CD4-positive, alpha-beta memory T cell (primary cell): ENCODE measurements at regions of chr16 and their contacts with region 1.

Region 1: DNA sequence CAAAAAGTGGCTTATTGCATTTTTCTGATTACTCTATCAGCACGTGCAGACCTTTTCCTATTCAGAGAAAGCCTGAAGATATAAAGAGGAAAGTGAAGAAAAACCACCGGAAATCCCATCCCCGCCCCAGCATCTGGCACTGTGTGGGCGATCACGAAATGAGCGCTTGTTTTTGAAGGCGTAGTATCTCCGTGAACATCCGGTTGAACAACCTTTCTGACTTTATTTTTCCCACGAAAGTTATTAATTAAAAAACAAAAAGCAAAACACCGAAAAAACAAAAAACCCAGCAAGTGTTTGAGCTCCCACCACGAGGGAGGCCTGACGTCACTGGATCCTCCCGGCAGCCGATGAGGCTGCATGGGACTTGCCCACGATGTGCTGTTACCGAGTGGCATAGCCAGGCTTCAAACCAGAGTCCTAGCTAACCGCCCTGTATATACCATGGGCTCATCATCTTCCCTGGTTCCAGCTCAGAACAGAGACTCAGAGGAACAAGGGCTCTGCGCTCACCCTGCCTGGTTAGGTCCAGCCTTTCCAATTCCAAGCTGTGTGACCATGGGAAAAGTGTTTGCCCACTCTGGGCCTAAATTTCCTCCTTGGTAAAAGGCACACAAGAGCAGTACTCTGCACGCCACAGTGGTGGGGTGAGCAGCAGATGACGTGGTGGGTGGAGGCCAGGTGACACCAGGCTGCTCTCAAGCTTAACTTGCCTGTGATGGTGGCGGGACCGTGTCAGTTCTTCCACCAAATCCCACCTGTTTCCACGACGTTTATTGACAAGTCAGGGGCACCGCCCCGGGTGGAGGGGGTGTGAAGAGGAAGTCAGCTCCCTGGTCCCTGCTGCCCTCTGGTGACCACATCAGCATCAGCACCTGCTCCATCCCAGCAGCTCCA is 34.3 kb upstream of the IL21R start:
- DNase-seq: peak; percentile 91 to 98 (median 93)
- H3K4me3 ChIP-seq: peak overlapping the region in 1 of 2 donors; percentile 36
- H3K4me3 Mint-ChIP-seq: peak overlapping the region in 7 of 8 donors; percentile 37 to 81 (median 70)
- H3K27ac ChIP-seq: peak overlapping the region; percentile 96
- H3K27ac Mint-ChIP-seq: peak overlapping the region; percentile 99 to 100 (median 99)
- H3K4me1 ChIP-seq: peaks cover 65% of the 10 kb centered on the region
- H3K4me1 Mint-ChIP-seq: peaks cover 32 to 65% (median 44%) of the 10 kb centered on the region in 4 donors
- H3K27me3 ChIP-seq: no peaks in the 10 kb centered on the region
- H3K27me3 Mint-ChIP-seq: no peaks in the 10 kb centered on the region

Region 2: DNA sequence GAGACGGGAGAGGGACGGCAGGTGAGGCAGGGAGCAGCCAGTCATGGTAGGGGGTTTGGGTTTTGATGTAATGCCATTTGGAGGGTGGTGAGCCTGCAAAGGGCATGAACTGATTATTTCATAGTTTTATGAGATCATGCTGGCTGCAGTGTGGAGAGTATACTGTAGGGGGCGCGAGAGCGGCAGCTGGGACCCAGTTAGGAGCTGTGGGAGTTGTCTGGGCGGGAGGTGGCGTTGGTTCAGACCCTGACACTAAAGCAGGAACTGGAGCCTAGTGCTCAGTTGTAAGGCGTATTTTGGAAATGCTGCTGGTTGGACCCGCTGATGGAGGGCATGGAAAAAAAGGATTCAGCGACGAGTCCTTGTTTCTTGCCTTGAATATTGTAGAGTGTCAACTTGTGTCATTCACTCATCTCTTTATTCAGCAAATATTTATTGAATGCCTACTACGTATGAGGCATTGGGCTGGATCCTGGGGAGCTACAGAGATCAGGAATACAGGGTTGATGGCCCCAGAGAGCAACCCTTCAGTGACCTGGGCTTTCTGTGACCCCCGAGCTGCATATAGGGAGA is 188.1 kb before region 1 on chr16:
- CTCF ChIA-PET with region 1: interaction called, 139 read pairs
- POLR2A ChIA-PET with region 1: interaction called, 37 read pairs
- intact Hi-C with region 1: loop called (anchors 1 kb)
- DNase-seq: peak; percentile 81 to 86 (median 85)
- H3K4me3 ChIP-seq: no peak overlapping the region
- H3K4me3 Mint-ChIP-seq: peak overlapping the region in 3 of 8 donors; percentile 0 to 64 (median 22)
- H3K27ac ChIP-seq: no peak overlapping the region
- H3K27ac Mint-ChIP-seq: peak overlapping the region; percentile 1 to 93 (median 85)
- H3K4me1 ChIP-seq: peaks cover 25% of the 10 kb centered on the region
- H3K4me1 Mint-ChIP-seq: peaks cover 21 to 46% (median 31%) of the 10 kb centered on the region in 4 donors
- H3K27me3 ChIP-seq: no peaks in the 10 kb centered on the region
- H3K27me3 Mint-ChIP-seq: no peaks in the 10 kb centered on the region

Region 3: GRCh38 chr16:27222249-27223225 is 145.2 kb before region 1 on chr16:
- CTCF ChIA-PET with region 1: interaction called, 28 read pairs
- POLR2A ChIA-PET with region 1: interaction called, 15 read pairs
- intact Hi-C with region 1: no loop called
- DNase-seq: no peak
- H3K4me3 ChIP-seq: no peak overlapping the region
- H3K4me3 Mint-ChIP-seq: no peak overlapping the region
- H3K27ac ChIP-seq: no peak overlapping the region
- H3K27ac Mint-ChIP-seq: peak overlapping the region in 6 of 7 donors; percentile 22 to 75 (median 48)
- H3K4me1 ChIP-seq: no peaks in the 10 kb centered on the region
- H3K4me1 Mint-ChIP-seq: peaks cover 7 to 23% (median 14%) of the 10 kb centered on the region in 4 donors
- H3K27me3 ChIP-seq: no peaks in the 10 kb centered on the region
- H3K27me3 Mint-ChIP-seq: no peaks in the 10 kb centered on the region

Region 4: DNA sequence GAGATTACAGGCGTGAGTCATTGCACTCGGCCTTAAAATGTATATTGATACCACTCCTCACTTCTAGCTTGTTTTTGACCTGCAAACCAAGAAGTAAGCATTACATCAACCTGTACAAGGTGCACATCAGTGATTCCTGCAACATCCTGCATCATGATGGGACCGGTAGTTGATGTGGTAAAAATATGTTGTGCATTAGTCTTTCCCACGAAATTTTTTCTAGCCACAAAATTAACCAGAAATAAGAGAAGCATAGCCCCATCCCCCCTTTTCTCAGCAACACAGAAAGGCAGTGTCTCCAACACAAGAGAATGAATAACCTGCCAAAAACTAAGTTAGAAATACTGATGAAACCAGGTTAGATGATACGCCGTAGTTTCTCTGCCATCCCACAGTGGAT is 78.0 kb before region 1 on chr16:
- CTCF ChIA-PET with region 1: no interaction called
- POLR2A ChIA-PET with region 1: no interaction called
- intact Hi-C with region 1: no loop called
- DNase-seq: peak in 1 of 5 donors; percentile 13
- H3K4me3 ChIP-seq: no peak overlapping the region
- H3K4me3 Mint-ChIP-seq: peak overlapping the region in 4 of 8 donors; percentile 8 to 60 (median 22)
- H3K27ac ChIP-seq: no peak overlapping the region
- H3K27ac Mint-ChIP-seq: peak overlapping the region in 6 of 7 donors; percentile 4 to 61 (median 28)
- H3K4me1 ChIP-seq: peaks cover 24% of the 10 kb centered on the region
- H3K4me1 Mint-ChIP-seq: peaks cover 13 to 44% (median 29%) of the 10 kb centered on the region in 4 donors
- H3K27me3 ChIP-seq: no peaks in the 10 kb centered on the region
- H3K27me3 Mint-ChIP-seq: no peaks in the 10 kb centered on the region

Region 5: GRCh38 chr16:27318392-27319226 is 49.1 kb before region 1 on chr16:
- CTCF ChIA-PET with region 1: interaction called, 25 read pairs
- POLR2A ChIA-PET with region 1: interaction called, 43 read pairs
- intact Hi-C with region 1: loop called (anchors 1 kb)
- DNase-seq: peak; percentile 32 to 78 (median 35)
- H3K4me3 ChIP-seq: peak overlapping the region; percentile 8 to 37
- H3K4me3 Mint-ChIP-seq: peak overlapping the region; percentile 89 to 98 (median 94)
- H3K27ac ChIP-seq: peak overlapping the region; percentile 96
- H3K27ac Mint-ChIP-seq: peak overlapping the region; percentile 94 to 99 (median 99)
- H3K4me1 ChIP-seq: peaks cover 82% of the 10 kb centered on the region
- H3K4me1 Mint-ChIP-seq: peaks cover 59 to 90% (median 78%) of the 10 kb centered on the region in 4 donors
- H3K27me3 ChIP-seq: no peaks in the 10 kb centered on the region
- H3K27me3 Mint-ChIP-seq: no peaks in the 10 kb centered on the region

Region 6: GRCh38 chr16:27436921-27437650 is 69.4 kb after region 1 on chr16:
- CTCF ChIA-PET with region 1: no interaction called
- POLR2A ChIA-PET with region 1: no interaction called
- intact Hi-C with region 1: no loop called
- DNase-seq: no peak
- H3K4me3 ChIP-seq: no peak overlapping the region
- H3K4me3 Mint-ChIP-seq: no peak overlapping the region
- H3K27ac ChIP-seq: no peak overlapping the region
- H3K27ac Mint-ChIP-seq: peak overlapping the region in 6 of 7 donors; percentile 25 to 81 (median 57)
- H3K4me1 ChIP-seq: no peaks in the 10 kb centered on the region
- H3K4me1 Mint-ChIP-seq: peaks cover 11 to 13% (median 12%) of the 10 kb centered on the region in 4 donors
- H3K27me3 ChIP-seq: no peaks in the 10 kb centered on the region
- H3K27me3 Mint-ChIP-seq: no peaks in the 10 kb centered on the region

Region 7: GRCh38 chr16:27449434-27450195 is 81.9 kb after region 1 on chr16:
- CTCF ChIA-PET with region 1: interaction called, 7 read pairs
- POLR2A ChIA-PET with region 1: interaction called, 35 read pairs
- intact Hi-C with region 1: loop called (anchors 2 kb)
- DNase-seq: peak; percentile 72 to 94 (median 80)
- H3K4me3 ChIP-seq: no peak overlapping the region
- H3K4me3 Mint-ChIP-seq: peak overlapping the region in 7 of 8 donors; percentile 50 to 88 (median 68)
- H3K27ac ChIP-seq: peak overlapping the region; percentile 53
- H3K27ac Mint-ChIP-seq: peak overlapping the region; percentile 80 to 99 (median 94)
- H3K4me1 ChIP-seq: peaks cover 74% of the 10 kb centered on the region
- H3K4me1 Mint-ChIP-seq: peaks cover 44 to 89% (median 70%) of the 10 kb centered on the region in 4 donors
- H3K27me3 ChIP-seq: no peaks in the 10 kb centered on the region
- H3K27me3 Mint-ChIP-seq: no peaks in the 10 kb centered on the region